ENCODE measurements at regions of chr17 and their contacts with region 1.

Region 1: DNA sequence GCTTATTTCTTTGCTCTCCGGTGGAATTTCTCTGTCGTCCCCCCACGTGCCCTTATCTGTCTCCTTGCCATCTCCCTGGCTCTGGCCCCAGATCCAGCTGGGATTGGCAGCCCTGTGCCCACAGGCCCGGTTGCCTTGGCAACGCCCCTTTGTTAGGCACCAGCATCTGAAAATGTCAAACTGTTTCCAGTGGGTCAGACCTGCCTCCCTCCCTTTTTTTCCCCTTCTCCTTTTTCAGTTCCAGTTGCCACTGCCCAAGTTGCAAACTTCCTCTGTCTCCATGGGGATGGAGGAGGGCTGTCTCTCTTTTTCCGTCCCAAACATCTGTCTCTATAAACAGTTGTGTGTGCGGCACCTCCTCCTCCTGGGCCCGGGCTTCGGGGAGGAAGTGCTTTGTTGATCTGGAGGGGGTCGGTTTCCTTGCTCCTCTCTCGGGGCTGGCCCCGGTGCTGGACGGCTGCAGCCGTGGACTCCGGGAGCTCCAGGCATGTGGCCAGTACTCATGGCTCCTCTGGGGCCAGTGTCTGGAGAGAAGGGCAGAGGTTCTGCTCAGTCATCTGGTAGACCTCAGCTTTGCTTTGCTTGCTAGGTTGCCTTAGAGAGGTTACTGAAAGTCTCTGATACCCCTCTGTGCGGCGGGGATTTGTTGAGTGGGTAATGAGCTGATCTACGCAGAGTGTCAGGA is 35.3 kb downstream of the SOCS3 start:
- DNase-seq: no peak
- H3K4me3 ChIP-seq: no peak overlapping the region
- H3K4me3 Mint-ChIP-seq: no peak overlapping the region
- H3K27ac Mint-ChIP-seq: no peak overlapping the region
- H3K4me1 ChIP-seq: peaks cover 2% of the 10 kb centered on the region; the same call in 1 of the 2 replicates
- H3K4me1 Mint-ChIP-seq: no peaks in the 10 kb centered on the region
- H3K27me3 ChIP-seq: no peaks in the 10 kb centered on the region
- H3K27me3 Mint-ChIP-seq: no peaks in the 10 kb centered on the region
- CTCF ChIP-seq: no peak

Region 2: DNA sequence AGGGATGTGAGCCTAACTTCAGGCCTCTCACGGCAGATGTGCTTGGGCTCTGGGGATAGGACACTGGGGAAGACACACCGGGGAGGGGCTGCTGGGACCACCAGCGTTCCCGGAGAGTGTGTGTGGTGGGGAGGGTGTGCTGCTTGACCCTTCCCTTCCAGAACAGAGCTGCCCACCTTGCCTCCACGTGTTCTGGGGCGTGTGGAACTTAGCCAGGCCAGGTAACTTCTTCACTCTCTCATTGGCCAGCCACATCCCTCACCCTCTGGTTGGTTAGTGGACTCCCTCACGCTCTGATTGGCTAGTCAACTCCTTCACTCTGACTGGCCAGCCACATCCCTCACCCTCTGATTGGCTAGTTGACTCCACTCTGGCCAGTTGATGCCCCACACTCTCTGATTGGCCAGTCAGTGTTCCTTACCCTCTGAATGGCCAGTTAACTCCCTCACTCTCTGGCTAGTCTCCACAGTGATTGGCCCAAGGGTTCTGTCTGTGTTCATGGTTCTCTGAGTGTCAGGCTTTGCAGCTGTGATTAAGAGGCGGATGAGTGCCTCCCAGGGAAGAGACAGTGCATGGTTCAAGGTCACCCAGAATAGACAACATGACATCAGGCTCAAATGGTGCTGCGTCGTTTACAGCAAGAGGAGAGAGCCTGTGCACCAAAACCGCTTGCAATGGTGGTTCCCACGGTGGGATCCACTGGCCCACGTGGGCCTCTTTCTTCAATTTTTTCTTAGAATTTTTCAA is 83.1 kb before region 1 on chr17:
- CTCF ChIA-PET with region 1: interaction called, 11 read pairs
- POLR2A ChIA-PET with region 1: no interaction called
- intact Hi-C with region 1: no loop called
- DNase-seq: peak; percentile 82 to 92
- H3K4me3 ChIP-seq: no peak overlapping the region
- H3K4me3 Mint-ChIP-seq: peak overlapping the region; percentile 1
- H3K27ac Mint-ChIP-seq: no peak overlapping the region
- H3K4me1 ChIP-seq: no peaks in the 10 kb centered on the region
- H3K4me1 Mint-ChIP-seq: peaks cover 6% of the 10 kb centered on the region
- H3K27me3 ChIP-seq: no peaks in the 10 kb centered on the region
- H3K27me3 Mint-ChIP-seq: no peaks in the 10 kb centered on the region
- CTCF ChIP-seq: no peak